ENCODE measurements at regions of chr5 and their contacts with region 1.

Region 1: DNA sequence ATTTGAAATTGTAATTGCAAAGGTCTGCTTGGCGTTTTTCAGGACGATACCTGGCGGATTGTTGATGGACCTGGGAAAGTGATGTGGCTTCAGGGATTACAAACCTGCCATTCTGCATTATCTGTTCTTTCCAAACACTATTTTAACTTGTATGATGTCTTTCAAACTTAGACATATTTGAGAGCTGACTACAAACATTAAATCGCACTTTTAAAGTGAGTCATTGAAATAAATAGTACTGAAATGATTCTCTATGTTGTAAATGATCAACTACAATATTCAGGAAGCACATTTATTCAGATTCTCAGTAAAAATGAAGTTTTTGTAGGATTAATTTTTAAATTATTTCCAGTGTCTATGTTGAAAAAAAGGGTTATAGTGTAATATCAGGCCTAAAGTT is 32.3 kb upstream of the TMEM171 start:
- DNase-seq: no peak
- H3K4me3 ChIP-seq: no peak overlapping the region
- H3K27ac ChIP-seq: no peak overlapping the region
- H3K4me1 ChIP-seq: no peaks in the 10 kb centered on the region
- H3K27me3 ChIP-seq: no peaks in the 10 kb centered on the region
- CTCF ChIP-seq: no peak

Region 2: DNA sequence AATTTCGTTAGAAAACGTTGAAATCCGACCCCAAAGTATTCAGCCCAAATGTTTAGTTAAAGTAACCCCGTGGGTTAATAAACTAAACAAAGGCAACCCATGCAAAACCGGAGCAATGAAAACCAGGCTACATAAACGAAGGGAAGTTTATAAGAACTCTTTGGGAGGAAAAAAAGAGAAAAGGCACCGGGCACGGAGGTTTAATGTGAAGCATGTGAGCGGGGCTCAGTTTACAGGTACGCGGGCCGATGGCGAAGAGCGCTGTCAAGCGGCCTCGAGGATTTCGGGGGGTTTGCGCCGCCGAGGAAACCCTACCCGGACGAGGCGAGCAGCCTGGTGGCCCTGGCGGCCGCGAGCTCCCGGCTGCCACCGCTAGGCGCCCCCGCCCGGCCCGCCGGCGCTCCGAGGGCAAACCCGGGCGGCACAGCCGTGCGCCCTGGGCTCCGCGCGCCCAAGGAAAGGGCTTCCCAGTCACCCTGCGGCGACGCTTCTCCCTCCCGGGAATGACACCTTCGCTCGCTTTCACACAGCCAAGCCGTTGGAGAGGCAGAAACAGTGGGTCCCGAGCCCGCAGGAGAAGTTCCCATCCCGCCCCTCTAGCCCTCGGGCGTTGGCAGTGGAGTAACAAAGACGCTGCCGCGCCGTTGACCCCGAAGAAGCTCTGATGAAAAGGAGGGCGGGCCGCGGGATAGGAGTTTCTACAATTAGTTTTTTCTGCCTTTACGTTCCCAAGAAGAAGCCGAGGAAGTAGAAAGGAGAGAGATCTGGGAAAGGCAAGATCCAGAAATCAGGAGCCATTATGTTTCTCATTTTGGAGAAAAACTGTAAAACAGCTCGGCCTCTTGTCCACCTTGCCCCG is 211.0 kb after region 1 on chr5:
- intact Hi-C with region 1: loop called (anchors 10 kb)
- DNase-seq: no peak
- H3K4me3 ChIP-seq: no peak overlapping the region
- H3K27ac ChIP-seq: no peak overlapping the region
- H3K4me1 ChIP-seq: peaks cover 8% of the 10 kb centered on the region
- H3K27me3 ChIP-seq: peaks cover 88% of the 10 kb centered on the region
- CTCF ChIP-seq: peak; percentile 28

Region 3: GRCh38 chr5:73327908-73328455 is 240.0 kb after region 1 on chr5:
- intact Hi-C with region 1: no loop called
- DNase-seq: no peak
- H3K4me3 ChIP-seq: no peak overlapping the region
- H3K27ac ChIP-seq: no peak overlapping the region
- H3K4me1 ChIP-seq: no peaks in the 10 kb centered on the region
- H3K27me3 ChIP-seq: no peaks in the 10 kb centered on the region
- CTCF ChIP-seq: no peak

Measured in colonic mucosa (tissue), 4 donors.